OCI-LY7 (cell line): ENCODE measurements at regions of chr5 and their contacts with region 1.

Region 1: DNA sequence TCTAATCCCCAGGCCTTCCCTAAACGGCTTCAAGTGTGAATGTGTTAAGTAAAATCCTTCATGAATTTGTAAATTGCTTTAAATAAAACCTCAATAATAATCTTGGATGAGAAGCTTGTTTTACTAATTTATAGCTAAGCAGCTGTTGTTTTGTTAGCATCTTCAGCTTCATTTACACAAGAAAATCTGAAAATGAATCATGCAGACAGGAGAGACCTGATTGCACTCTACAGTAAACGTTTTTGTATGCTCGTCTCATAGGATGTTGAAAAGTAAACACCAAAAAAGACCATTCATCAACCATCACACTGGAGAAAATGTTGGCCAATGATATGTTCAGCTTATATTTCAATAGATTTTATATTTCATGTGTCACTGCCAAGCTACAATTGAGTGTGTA is 40.4 kb upstream of the MAP3K1 start:
- DNase-seq: no peak
- H3K4me3 ChIP-seq: no peak overlapping the region
- H3K27ac ChIP-seq: no peak overlapping the region
- H3K4me1 ChIP-seq: peaks cover 11% of the 10 kb centered on the region
- CTCF ChIP-seq: no peak

Region 2: DNA sequence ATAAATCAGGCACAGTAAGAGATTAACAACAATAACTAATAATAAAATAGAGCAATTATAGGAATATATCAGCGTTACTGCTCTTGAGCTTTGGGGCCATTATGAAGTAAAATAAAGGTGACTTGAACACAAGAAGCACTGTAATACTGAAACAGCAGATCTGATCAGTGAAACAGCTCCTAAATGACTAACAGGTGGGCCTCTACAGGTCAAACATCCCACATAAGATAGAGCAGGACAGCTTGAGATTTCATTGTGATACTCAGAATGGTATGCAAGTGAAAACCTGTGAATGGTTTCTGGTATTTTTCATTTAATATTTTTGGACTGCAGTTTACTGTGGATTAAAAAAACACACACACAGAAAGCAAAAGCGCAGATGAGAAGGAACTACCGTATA is 16.4 kb after region 1 on chr5:
- CTCF ChIA-PET with region 1: no interaction called
- POLR2A ChIA-PET with region 1: interaction called, 12 read pairs
- intact Hi-C with region 1: no loop called
- DNase-seq: no peak
- H3K4me3 ChIP-seq: no peak overlapping the region
- H3K27ac ChIP-seq: no peak overlapping the region
- H3K4me1 ChIP-seq: no peaks in the 10 kb centered on the region
- CTCF ChIP-seq: no peak